Psoas muscle (tissue), 8 donors: ENCODE measurements at regions of chr3 and their contacts with region 1.

Region 1: GRCh38 chr3:13091898-13092611 is 18.8 kb upstream of the IQSEC1 start:
- DNase-seq: peak; percentile 81 to 90
- ATAC-seq: peak; percentile 87 to 94 (median 90)
- H3K4me3 ChIP-seq: peak overlapping the region; percentile 13
- H3K27ac ChIP-seq: no peak overlapping the region
- H3K4me1 ChIP-seq: no peaks in the 10 kb centered on the region
- H3K27me3 ChIP-seq: no peaks in the 10 kb centered on the region
- CTCF ChIP-seq: peak; percentile 97

Region 2: GRCh38 chr3:12799525-12800440 is 292.3 kb before region 1 on chr3:
- intact Hi-C with region 1: no loop called
- DNase-seq: no peak
- ATAC-seq: no peak
- H3K4me3 ChIP-seq: peak overlapping the region; percentile 84
- H3K27ac ChIP-seq: peak overlapping the region; percentile 95
- H3K4me1 ChIP-seq: peaks cover 39% of the 10 kb centered on the region
- H3K27me3 ChIP-seq: no peaks in the 10 kb centered on the region
- CTCF ChIP-seq: no peak

Region 3: DNA sequence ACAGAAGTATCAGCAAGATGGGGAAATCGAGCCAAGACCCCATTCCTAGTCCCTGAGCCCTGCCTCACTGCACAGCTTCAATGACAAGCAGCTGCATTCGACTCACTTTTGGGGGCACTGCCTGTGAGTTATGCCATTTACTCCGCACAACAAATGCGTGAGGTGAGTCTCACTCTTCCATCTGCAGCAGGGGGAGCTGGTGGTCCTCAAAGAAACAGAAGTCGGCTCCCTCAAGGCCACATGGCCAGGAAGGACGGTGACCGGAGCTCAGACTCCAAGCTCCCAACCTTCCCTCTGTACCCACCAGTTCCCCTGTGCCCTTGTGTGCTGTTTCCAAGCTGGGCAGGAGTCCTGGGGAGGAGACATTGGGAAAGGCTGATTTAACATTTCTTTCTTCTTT is 108.9 kb after region 1 on chr3:
- intact Hi-C with region 1: loop called in 1 of 2 experiments (anchors 5 kb)
- DNase-seq: peak in 1 of 2 donors; percentile 22
- ATAC-seq: no peak
- H3K4me3 ChIP-seq: no peak overlapping the region
- H3K27ac ChIP-seq: no peak overlapping the region
- H3K4me1 ChIP-seq: no peaks in the 10 kb centered on the region
- H3K27me3 ChIP-seq: peaks cover 0 to 14% (median 3%) of the 10 kb centered on the region in 3 donors
- CTCF ChIP-seq: no peak

Region 4: DNA sequence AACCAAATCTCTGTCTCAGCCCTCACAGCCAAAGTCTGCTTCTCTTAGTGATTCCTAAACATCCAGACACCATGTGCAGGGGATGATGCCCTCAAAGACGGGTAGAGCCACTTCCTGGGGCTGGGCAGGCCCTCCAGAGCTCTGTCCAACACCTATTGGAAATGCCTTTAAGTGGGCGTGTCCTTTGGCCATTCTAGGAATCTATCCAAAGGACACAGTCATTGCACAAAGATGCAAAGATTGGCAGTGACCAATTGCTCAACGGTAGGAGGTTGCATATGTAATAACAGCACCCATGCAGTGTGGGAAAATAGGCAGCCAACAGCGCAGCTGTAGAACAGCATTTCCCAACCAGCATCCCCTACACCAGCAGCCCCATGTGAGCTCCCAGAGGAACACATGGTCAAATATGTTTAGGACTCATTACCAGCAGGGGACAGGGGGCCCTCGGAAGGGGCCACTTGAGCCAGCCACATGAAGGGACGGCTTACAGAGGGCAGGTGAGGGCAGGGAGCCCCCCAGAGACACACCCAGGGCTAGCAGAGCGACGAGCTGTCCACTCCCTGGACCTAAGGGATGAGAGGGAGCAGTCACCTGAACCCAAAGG is 124.0 kb after region 1 on chr3:
- intact Hi-C with region 1: loop called in 1 of 2 experiments (anchors 5 kb)
- DNase-seq: peak in 1 of 2 donors; percentile 23
- ATAC-seq: peak in 1 of 4 donors; percentile 4
- H3K4me3 ChIP-seq: no peak overlapping the region
- H3K27ac ChIP-seq: no peak overlapping the region
- H3K4me1 ChIP-seq: no peaks in the 10 kb centered on the region
- H3K27me3 ChIP-seq: no peaks in the 10 kb centered on the region
- CTCF ChIP-seq: no peak

Region 5: GRCh38 chr3:13282986-13283876 is 191.2 kb after region 1 on chr3:
- intact Hi-C with region 1: loop called (anchors 1 to 5 kb)
- DNase-seq: peak in 1 of 2 donors; percentile 55
- ATAC-seq: peak; percentile 46 to 77 (median 68)
- H3K4me3 ChIP-seq: peak overlapping the region; percentile 56
- H3K27ac ChIP-seq: no peak overlapping the region
- H3K4me1 ChIP-seq: no peaks in the 10 kb centered on the region
- H3K27me3 ChIP-seq: peaks cover 0 to 51% (median 10%) of the 10 kb centered on the region in 3 donors
- CTCF ChIP-seq: peak; percentile 36

Region 6: DNA sequence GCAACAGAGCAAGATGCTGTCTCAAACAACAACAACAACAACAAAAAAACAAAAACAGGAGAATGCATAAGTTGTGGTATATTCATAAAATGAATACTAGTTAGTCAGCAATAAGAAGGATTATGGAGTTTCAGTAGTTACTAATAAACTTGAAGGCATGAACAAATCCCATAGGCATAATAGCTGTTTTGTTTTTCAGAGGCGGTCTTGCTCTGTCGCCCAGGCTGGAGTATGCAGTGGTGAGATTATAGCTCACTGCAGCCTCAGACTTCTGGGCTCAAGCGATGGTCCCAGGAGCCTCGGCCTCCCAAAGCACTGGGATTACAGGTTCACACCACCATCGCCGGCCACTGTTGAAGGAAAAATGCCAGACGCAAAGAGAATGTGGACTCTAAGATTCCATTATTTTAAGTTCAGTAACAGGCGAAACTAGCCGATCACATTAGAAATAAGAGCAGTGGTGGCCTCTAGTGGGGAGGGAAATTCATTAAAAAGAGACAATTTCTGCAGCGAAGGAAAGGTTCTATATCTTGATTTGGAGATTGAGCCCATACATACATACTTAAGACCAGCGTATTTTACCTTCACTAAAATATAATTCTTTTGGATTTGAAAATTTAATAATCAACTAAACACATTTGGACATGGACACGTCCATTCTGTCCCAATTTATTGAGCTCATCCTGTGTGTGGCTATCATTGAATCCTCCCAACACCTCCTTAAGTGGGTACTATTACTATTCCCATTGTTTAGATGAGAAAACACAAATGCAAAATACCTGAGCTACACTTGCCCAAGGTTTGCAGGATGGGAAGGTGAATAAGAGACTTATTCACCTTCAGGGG is 360.7 kb after region 1 on chr3:
- intact Hi-C with region 1: loop called (anchors 2 to 5 kb)
- DNase-seq: no peak
- ATAC-seq: peak in 2 of 4 donors; percentile 40 to 67
- H3K4me3 ChIP-seq: peak overlapping the region; percentile 73
- H3K27ac ChIP-seq: peak overlapping the region; percentile 75
- H3K4me1 ChIP-seq: peaks cover 3% of the 10 kb centered on the region
- H3K27me3 ChIP-seq: no peaks in the 10 kb centered on the region
- CTCF ChIP-seq: peak; percentile 62

Region 7: DNA sequence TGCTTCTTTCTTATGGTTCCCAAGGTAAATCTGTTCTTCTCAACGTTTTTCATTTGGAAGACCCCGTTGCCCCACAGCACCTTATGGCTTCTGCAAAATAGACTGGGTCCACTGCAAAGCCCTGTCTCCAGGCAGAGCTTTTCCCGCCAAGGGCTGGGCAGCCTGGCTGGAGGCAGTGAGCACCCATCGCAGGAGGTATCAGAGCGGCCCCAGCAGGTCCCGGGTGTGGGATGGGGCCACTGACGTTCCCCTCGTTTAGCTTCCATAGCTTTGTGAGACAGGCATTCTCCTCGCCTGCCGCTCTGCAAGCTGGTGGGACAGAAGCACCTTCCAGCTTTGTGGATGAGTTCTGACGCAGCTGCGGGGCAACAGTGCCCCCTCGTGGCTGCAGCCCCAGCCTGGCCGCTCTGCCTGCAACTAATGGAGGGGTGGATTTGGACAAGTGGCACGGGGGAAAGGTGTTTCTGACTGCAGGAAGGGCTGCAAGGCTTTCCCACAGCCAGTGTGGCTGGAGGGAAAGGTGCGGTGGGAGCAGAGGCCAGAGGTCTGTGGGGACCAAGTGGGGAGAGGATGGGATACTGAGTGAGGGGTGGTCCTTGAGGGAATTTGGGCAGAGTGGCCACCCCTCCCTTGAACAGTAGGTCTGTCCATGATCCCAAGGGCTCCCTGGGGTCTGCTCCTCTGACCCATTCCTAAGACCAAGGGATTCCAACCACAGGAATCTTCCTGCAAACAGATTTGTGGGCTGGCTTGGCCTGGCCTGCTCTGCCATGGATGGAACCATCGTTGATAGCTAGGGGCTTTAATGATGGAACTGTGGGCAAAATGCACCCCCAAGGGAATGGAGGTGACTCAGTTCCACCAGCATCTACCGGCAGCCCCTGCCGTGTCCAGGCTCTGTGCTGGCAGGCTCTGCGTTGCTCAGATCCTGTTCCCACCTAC is 556.3 kb after region 1 on chr3:
- intact Hi-C with region 1: loop called (anchors 1 to 5 kb)
- DNase-seq: peak; percentile 83 to 88
- ATAC-seq: peak; percentile 80 to 90 (median 84)
- H3K4me3 ChIP-seq: no peak overlapping the region
- H3K27ac ChIP-seq: no peak overlapping the region
- H3K4me1 ChIP-seq: peaks cover 4% of the 10 kb centered on the region
- H3K27me3 ChIP-seq: peaks cover 0 to 9% (median 0%) of the 10 kb centered on the region in 3 donors
- CTCF ChIP-seq: peak; percentile 97